Colonic mucosa (tissue), 4 donors: ENCODE measurements at regions of chr6 and their contacts with region 1.

Region 1: DNA sequence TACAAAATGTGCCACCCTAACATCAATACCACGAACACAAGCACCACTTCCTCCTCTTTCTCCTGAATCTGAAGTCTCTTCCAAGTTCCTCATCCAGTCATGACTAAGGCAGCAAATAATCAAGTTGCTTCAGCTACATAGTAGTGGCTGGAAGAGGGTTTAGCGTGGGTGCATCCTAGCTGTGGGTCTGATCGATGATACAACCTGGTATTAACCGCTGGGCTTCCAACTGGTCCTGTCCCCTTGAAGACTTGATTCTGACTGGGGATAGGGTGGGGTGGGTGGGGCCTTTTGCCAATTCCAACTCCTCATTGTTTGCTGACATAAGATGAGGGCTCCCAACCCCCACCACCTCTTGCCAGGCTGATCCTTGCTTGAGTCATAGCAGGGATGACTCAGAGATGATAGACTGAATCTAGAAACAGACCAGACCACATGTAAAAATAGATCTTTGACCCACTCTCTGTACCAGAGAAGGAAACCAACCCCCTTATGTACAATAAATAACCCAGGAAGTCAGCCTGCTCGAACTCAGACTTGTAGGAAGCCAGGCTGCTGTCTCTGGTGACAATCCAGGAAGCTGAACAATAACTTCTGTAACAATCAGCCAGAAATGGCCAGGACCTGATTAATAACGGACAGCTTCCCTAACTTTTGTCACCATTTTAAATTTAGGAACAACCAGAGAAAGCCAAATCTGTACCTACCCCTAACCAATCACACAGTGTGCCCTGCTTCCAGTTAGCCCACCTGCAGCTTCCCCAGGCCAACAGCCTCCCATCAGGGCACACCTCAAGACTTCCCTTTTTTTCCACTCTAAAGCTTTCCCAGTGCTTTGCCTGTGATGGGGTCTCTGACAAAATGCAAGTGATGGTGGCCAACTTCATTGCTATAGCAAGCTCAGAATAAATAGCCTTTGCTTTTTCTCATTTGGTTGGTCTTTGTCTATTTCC is 68.9 kb upstream of the FAM184A start:
- DNase-seq: peak; percentile 75
- H3K4me3 ChIP-seq: no peak overlapping the region
- H3K27ac ChIP-seq: peak overlapping the region; percentile 60
- H3K4me1 ChIP-seq: peaks cover 6% of the 10 kb centered on the region
- H3K27me3 ChIP-seq: no peaks in the 10 kb centered on the region
- CTCF ChIP-seq: no peak

Region 2: GRCh38 chr6:119078376-119079282 is 68.7 kb before region 1 on chr6 and contains the start of gene FAM184A:
- intact Hi-C with region 1: no loop called
- DNase-seq: peak; percentile 54
- H3K4me3 ChIP-seq: peak within 1 kb of the TSS; percentile 44
- H3K27ac ChIP-seq: no peak within 1 kb of the TSS
- H3K4me1 ChIP-seq: no peaks in the 10 kb centered on the region
- H3K27me3 ChIP-seq: no peaks in the 10 kb centered on the region
- CTCF ChIP-seq: no peak
- total RNA-seq, gene FAM184A: 0.56 to 0.62 TPM

Region 3: DNA sequence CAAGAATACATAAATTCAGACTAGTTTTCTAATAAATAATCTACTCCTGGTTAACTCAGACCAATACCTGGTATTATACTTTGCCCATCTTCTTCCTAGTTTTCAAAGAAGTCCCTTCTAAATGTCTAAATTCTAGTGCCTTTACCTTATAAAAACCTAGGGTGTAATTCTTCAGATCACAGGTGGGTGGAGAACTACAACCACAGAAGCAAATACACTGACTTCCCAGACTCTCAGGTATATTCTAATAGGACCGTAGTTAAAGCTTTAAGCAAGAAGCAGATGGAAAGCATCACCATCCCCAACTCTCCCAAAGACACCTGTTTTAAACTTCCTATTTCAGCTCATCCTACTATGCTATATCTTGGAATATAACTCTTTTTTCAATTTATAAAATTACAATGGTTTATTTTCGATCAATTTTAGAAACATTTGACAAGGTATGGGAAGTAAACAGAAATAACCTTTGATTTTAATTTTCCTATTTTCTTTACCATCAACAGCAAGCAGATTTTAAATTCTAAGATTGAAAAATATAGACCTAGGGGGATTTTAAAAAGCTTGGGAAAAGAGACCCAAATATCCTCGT is 186.4 kb after region 1 on chr6:
- intact Hi-C with region 1: no loop called
- DNase-seq: no peak
- H3K4me3 ChIP-seq: no peak overlapping the region
- H3K27ac ChIP-seq: no peak overlapping the region
- H3K4me1 ChIP-seq: peaks cover 5% of the 10 kb centered on the region
- H3K27me3 ChIP-seq: no peaks in the 10 kb centered on the region
- CTCF ChIP-seq: peak; percentile 48

Region 4: DNA sequence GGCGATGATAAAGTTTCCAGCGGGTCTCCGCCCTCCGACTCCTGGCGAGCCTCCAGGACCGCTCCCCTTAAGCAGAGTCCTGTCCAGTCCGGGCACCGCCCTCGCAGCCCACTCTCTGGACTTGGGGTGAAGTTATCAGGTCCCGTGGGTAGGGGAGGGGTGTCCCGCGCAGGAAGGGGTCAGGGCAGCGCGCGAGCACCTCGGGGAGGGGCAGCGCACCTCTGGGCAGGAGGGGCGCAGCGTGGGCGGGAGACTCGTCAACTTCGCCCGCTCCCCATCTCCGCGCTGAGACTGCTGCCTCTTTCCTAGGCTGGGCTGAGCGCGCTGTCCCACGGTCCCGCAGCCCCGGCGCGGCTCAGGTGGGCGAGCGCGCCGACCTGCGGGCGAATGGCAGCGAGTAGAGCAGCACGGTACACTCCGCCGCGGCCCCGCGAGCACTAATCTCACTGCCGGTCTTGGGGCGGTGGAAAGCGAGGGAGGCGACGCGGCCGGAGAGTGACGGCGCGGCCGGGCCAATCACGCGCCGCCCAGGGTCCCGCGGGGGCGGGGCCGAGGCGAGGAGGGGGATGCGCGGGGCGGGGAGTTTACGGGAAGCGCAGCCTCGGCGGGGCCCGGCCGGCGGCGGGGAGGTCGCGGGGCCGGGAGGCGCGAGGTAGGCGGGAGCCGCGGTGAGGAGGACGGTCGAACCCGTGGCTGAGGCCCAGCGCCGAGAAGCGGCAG is 202.1 kb after region 1 on chr6 and contains the start of gene MAN1A1:
- intact Hi-C with region 1: loop called (anchors 5 kb)
- DNase-seq: peak; percentile 92
- H3K4me3 ChIP-seq: peak within 1 kb of the TSS; percentile 91
- H3K27ac ChIP-seq: peak within 1 kb of the TSS; percentile 93
- H3K4me1 ChIP-seq: no peaks in the 10 kb centered on the region
- H3K27me3 ChIP-seq: no peaks in the 10 kb centered on the region
- CTCF ChIP-seq: no peak
- total RNA-seq, gene MAN1A1: 43.5 to 77.1 TPM

Region 5: DNA sequence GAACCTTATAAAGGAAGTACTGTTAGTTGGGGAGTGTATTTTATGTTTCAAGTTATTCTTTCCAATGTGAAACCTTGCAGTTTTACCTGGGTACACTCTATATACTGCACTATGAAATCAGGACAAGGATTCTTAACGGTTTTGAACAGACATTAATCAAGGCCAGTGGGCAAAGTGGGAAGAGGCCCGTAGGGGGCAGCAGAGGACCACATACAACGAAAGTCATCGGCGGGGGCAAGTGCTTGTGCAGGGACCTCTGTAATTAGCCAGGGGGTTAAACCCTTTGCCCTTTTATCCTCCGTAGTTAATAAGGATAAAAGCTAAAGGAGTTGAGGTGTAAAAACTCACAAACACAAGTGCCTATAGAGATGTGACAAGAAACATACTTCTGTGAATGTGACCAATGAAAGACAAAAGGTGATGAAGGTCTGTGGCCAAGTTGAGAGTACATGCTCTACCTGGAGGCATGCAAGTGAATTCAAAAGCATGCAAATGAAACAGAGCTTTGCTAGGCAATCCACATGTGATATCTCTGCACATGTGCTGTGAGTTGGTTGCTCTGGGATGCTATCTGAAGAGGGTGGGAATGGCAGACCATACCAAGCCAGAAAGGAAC is 594.9 kb after region 1 on chr6:
- intact Hi-C with region 1: loop called (anchors 5 kb)
- DNase-seq: peak; percentile 63
- H3K4me3 ChIP-seq: no peak overlapping the region
- H3K27ac ChIP-seq: no peak overlapping the region
- H3K4me1 ChIP-seq: no peaks in the 10 kb centered on the region
- H3K27me3 ChIP-seq: no peaks in the 10 kb centered on the region
- CTCF ChIP-seq: peak; percentile 71